Activated B cell treated with CpG ODN at 0.5 μM for 24 hours (primary cell): ENCODE measurements at regions of chr3 and their contacts with region 1.

Region 1: DNA sequence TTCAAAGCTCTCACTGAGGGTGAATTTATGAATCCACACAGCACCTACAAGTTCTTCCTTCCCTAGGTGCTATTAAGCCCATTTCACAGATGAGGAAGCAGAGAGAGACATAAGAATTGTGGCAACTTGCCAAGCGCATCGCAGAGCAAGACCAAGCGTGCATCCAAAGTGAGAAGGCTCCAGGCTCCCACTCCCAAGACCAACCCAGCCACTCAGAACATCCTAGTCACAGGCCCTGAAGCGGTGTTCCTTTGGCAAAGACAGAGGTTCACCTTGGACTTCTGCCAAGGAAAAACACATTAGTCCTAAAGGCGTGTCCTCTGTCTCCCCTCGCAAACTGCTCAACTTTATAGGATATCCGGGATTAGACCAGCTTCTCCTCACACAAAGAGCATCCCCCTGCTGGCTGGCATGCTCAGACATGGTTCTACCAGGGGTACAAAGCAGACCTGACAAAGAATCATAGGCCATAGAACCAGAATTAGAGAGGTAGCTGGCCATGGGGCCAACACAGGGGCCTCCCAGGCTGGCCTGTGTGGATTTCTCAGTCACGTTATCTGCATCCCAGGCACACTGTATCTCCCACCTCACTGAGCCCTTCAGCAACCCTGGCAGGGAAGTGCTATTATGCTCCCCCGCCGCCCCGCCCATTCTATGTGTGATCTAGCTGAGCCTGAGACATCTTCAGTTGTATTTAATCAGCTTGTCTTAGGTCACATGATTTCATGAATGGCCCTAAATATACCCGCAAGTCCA is 160.2 kb downstream of the FOXP1 start:
- DNase-seq: no peak
- ATAC-seq: no peak
- H3K4me3 Mint-ChIP-seq: no peak overlapping the region
- H3K27ac Mint-ChIP-seq: peak overlapping the region; percentile 99
- H3K4me1 Mint-ChIP-seq: peaks cover 91% of the 10 kb centered on the region
- H3K27me3 Mint-ChIP-seq: no peaks in the 10 kb centered on the region
- CTCF ChIP-seq: no peak

Region 2: DNA sequence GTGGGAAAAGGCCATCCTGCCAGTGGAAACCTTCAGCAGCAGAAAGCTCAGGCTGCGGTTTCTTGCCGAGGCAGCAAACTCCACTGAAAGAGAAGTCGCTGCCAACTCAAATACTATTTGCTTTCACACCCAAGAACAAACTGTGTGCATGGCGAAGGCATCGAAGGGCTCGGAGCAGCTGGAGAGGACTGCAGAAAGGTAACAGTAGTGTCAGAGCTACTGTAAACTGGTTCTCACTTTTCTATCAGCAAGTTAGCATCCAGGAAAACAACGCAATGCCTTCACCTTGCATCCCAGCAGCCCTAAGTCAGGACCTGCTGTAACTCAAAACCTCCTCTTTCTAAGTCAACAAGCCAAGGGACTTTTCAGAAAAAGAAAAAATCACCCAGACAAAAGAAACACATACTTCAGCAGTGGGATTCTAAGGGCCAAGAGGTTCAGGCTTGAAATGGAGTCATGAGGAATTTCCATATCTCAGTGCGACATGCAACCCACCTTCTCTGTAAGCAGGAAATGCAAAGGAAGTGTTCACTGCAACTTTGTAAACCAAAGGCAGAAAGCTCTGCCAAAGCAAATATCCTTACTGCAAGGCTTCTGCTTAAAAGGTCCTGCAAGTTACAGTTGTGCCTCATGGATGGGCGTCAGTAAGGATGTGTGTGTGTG is 33.3 kb before region 1 on chr3:
- CTCF ChIA-PET with region 1: no interaction called
- POLR2A ChIA-PET with region 1: interaction called, 13 read pairs
- intact Hi-C with region 1: loop called (anchors 1 kb)
- DNase-seq: no peak
- ATAC-seq: peak; percentile 6
- H3K4me3 Mint-ChIP-seq: peak overlapping the region; percentile 73
- H3K27ac Mint-ChIP-seq: peak overlapping the region; percentile 99
- H3K4me1 Mint-ChIP-seq: peaks cover 86% of the 10 kb centered on the region
- H3K27me3 Mint-ChIP-seq: no peaks in the 10 kb centered on the region
- CTCF ChIP-seq: no peak